HepG2 (cell line): ENCODE measurements at regions of chr6 and their contacts with region 1.

Region 1: GRCh38 chr6:33248925-33249731 is 22.5 kb downstream of the VPS52 start:
- DNase-seq: peak; percentile 99
- ATAC-seq: peak; percentile 93
- H3K4me3 ChIP-seq: peak overlapping the region; percentile 80 to 89 (median 86)
- H3K27ac ChIP-seq: peak overlapping the region; percentile 94
- H3K4me1 ChIP-seq: peaks cover 29% of the 10 kb centered on the region
- H3K27me3 ChIP-seq: no peaks in the 10 kb centered on the region; a peak in 1 of 5 replicates
- CTCF ChIP-seq: peak; percentile 74
- EP300 ChIP-seq: no peak
- POLR2A ChIP-seq: peak; percentile 90 to 91
- RAD21 ChIP-seq: peak; percentile 17; the same call in 1 of the 2 replicates

Region 2: DNA sequence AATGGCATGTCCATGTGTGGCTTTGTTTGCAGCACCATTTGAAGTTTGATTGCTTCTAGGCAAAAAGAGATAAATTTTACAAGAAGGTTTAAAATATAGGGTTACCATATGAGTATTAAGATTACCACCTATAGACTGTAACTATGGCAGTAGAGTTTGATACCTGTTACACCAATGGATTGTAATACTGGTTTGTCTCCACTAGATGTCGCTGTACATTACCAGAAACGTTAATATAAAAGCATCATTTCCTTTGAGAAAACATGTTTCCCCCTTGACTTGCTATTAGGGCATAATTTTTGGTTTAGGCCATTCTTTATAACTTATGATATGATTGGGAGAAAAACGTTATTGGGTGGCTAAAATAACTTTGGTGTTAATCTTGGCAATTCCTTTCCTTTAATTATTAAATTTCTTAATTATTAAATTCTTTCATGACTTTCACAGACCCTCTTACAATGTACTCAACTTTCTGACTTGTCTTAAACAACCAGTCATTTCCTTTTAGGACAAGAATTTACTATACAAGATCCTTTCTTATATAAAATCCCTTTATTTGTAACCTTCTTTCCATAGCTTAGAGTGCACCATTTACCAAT is 130.5 kb before region 1 on chr6:
- CTCF ChIA-PET with region 1: interaction called, 19 read pairs
- POLR2A ChIA-PET with region 1: interaction called, 11 read pairs
- in situ Hi-C with region 1: loop called (anchors 5 kb)
- intact Hi-C with region 1: loop called (anchors 1 kb)
- DNase-seq: peak; percentile 66
- ATAC-seq: no peak
- H3K4me3 ChIP-seq: no peak overlapping the region
- H3K27ac ChIP-seq: no peak overlapping the region
- H3K4me1 ChIP-seq: peaks cover 32% of the 10 kb centered on the region
- H3K27me3 ChIP-seq: peaks cover 2 to 30% of the 10 kb centered on the region in 2 experiments; a peak in 4 of 5 replicates
- CTCF ChIP-seq: peak; percentile 75
- EP300 ChIP-seq: no peak
- POLR2A ChIP-seq: no peak
- RAD21 ChIP-seq: no peak

Region 3: DNA sequence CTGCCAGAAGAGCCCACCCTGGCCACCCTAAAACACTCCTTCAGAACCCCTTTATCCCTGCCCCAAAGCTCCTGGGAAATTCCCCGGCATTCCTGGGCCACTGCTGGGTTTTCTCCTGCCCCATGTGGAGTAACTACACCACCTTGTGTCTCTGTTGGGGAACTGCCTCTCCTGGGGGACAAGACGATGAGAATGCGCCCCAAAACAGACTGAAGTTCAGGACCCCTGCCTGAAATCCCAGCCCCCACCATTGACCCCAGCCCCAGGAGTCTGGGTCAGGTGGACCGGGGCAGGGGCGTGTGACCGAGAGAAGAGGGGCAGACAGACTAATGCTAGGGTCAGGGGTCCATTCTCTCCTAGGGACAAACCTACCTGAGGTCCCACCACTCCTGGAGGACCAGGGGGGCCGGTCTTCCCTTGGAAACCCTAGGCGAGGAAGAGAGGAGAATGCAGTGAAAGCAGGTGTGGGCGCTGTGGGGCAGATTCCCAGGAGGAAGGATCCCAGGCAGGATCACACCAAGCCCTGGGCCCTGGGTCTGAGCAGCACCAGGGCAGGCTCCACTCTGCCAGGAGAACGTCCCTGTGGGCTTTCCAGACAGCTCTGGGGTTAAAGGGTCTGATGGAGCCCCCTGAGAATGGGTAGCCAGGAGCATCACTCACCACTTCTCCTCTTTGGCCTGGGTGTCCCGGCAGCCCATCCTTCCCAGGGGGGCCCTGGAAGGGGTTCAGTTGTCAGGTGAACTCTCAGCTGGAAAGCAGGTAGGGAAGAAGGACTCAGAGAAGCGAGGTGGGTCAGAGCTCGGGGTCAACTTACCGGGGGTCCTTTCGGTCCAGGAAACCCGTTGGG is 76.2 kb before region 1 on chr6:
- CTCF ChIA-PET with region 1: interaction called, 4 read pairs
- POLR2A ChIA-PET with region 1: interaction called, 4 read pairs
- in situ Hi-C with region 1: no loop called
- intact Hi-C with region 1: loop called (anchors 2 kb)
- DNase-seq: peak; percentile 53
- ATAC-seq: peak; percentile 65
- H3K4me3 ChIP-seq: peak overlapping the region in 1 of 3 experiments; percentile 5; a peak in 1 of 6 replicates
- H3K27ac ChIP-seq: no peak overlapping the region
- H3K4me1 ChIP-seq: peaks cover 22% of the 10 kb centered on the region
- H3K27me3 ChIP-seq: peaks cover 2 to 48% of the 10 kb centered on the region in 2 experiments; a peak in 4 of 5 replicates
- CTCF ChIP-seq: peak; percentile 91
- EP300 ChIP-seq: no peak
- POLR2A ChIP-seq: no peak
- RAD21 ChIP-seq: peak; percentile 91

Region 4: GRCh38 chr6:33237741-33238140 is 11.4 kb before region 1 on chr6:
- CTCF ChIA-PET with region 1: no interaction called
- POLR2A ChIA-PET with region 1: interaction called, 16 read pairs
- in situ Hi-C with region 1: no loop called
- intact Hi-C with region 1: no loop called
- DNase-seq: no peak
- ATAC-seq: no peak
- H3K4me3 ChIP-seq: no peak overlapping the region
- H3K27ac ChIP-seq: no peak overlapping the region
- H3K4me1 ChIP-seq: no peaks in the 10 kb centered on the region
- H3K27me3 ChIP-seq: peaks cover 2 to 44% of the 10 kb centered on the region in 2 experiments; a peak in 4 of 5 replicates
- CTCF ChIP-seq: no peak
- EP300 ChIP-seq: no peak
- POLR2A ChIP-seq: no peak
- RAD21 ChIP-seq: no peak

Region 5: GRCh38 chr6:33276864-33277662 is 27.9 kb after region 1 on chr6 and contains the start of gene B3GALT4:
- CTCF ChIA-PET with region 1: no interaction called
- POLR2A ChIA-PET with region 1: interaction called, 94 read pairs
- in situ Hi-C with region 1: no loop called
- intact Hi-C with region 1: no loop called
- DNase-seq: no peak
- ATAC-seq: peak; percentile 10
- H3K4me3 ChIP-seq: no peak within 1 kb of the TSS
- H3K27ac ChIP-seq: no peak within 1 kb of the TSS
- H3K4me1 ChIP-seq: peaks cover 31% of the 10 kb centered on the region
- H3K27me3 ChIP-seq: no peaks in the 10 kb centered on the region; a peak in 1 of 5 replicates
- CTCF ChIP-seq: no peak; the same call in 1 of the 2 replicates
- EP300 ChIP-seq: no peak
- POLR2A ChIP-seq: peak; percentile 23 to 55; a peak in 3 of 4 replicates
- RAD21 ChIP-seq: peak; percentile 66
- total RNA-seq, gene B3GALT4: 0.27 TPM in 1 of 2 replicates, not detected in the other

Region 6: GRCh38 chr6:33317669-33318425 is 68.7 kb after region 1 on chr6 and contains the start of gene ZBTB22:
- CTCF ChIA-PET with region 1: no interaction called
- POLR2A ChIA-PET with region 1: interaction called, 12 read pairs
- in situ Hi-C with region 1: no loop called
- intact Hi-C with region 1: no loop called
- DNase-seq: peak; percentile 99
- ATAC-seq: peak; percentile 79
- H3K4me3 ChIP-seq: peak within 1 kb of the TSS; percentile 71 to 79 (median 73)
- H3K27ac ChIP-seq: peak within 1 kb of the TSS; percentile 82
- H3K4me1 ChIP-seq: peaks cover 55% of the 10 kb centered on the region
- H3K27me3 ChIP-seq: no peaks in the 10 kb centered on the region; a peak in 2 of 5 replicates
- CTCF ChIP-seq: no peak
- EP300 ChIP-seq: no peak
- POLR2A ChIP-seq: no peak
- RAD21 ChIP-seq: no peak
- total RNA-seq, gene ZBTB22: 6.6 and 8.0 TPM in 2 replicates